Activated CD4-positive, alpha-beta memory T cell treated with anti-CD3 and anti-CD28 coated beads for 36 hours (primary cell): ENCODE measurements at regions of chr17 and their contacts with region 1.

Region 1: GRCh38 chr17:74790161-74791054 is 14.3 kb upstream of the NAT9 start:
- DNase-seq: no peak
- H3K4me3 Mint-ChIP-seq: no peak overlapping the region
- H3K27ac Mint-ChIP-seq: peak overlapping the region; percentile 57
- H3K4me1 Mint-ChIP-seq: peaks cover 31% of the 10 kb centered on the region
- H3K27me3 Mint-ChIP-seq: no peaks in the 10 kb centered on the region

Region 2: DNA sequence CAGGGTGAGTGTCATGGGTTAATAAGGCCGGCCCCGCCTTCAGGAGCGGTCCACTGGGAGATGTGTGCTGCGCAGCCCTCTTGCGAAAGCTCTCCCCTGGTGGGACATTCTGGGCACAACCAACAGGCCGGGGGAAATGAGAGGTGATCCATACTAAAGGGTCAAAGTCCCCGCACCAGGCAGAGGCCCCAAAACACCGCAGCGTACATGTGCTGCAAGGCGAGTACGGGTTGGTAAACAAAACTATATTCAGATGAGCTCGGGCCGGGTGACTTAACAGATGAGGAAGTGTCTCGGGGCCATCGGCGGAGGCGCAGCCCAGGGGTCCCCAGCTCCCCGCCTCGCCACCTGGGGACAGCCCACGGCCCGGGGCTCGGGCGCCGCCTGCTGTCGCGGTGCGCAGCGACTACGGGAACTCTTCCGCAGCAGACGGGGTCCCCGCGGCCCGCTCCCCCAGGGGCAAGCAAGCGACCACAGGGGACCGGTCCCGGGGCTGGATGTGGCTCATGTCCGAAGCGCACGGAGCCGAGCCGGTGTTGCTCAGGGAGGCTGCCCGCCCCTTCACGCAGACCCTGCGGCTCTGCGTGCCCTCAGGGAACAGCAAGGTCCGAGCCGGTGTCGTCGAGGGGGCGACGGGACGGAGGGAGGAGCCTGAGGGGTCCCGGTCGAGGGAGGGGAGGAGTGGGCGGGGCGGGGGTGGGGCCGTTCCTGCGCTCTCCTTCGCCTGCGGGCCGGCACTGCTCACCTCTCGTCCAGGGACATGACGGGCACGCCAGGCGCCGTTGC is 53.7 kb before region 1 on chr17 and contains the start of gene RAB37:
- CTCF ChIA-PET with region 1: interaction called, 20 read pairs
- POLR2A ChIA-PET with region 1: no interaction called
- intact Hi-C with region 1: no loop called
- DNase-seq: peak; percentile 53
- H3K4me3 Mint-ChIP-seq: peak within 1 kb of the TSS; percentile 77
- H3K27ac Mint-ChIP-seq: peak within 1 kb of the TSS; percentile 86
- H3K4me1 Mint-ChIP-seq: peaks cover 43% of the 10 kb centered on the region
- H3K27me3 Mint-ChIP-seq: no peaks in the 10 kb centered on the region
- total RNA-seq, gene RAB37: 6.5 to 7.0 TPM

Region 3: DNA sequence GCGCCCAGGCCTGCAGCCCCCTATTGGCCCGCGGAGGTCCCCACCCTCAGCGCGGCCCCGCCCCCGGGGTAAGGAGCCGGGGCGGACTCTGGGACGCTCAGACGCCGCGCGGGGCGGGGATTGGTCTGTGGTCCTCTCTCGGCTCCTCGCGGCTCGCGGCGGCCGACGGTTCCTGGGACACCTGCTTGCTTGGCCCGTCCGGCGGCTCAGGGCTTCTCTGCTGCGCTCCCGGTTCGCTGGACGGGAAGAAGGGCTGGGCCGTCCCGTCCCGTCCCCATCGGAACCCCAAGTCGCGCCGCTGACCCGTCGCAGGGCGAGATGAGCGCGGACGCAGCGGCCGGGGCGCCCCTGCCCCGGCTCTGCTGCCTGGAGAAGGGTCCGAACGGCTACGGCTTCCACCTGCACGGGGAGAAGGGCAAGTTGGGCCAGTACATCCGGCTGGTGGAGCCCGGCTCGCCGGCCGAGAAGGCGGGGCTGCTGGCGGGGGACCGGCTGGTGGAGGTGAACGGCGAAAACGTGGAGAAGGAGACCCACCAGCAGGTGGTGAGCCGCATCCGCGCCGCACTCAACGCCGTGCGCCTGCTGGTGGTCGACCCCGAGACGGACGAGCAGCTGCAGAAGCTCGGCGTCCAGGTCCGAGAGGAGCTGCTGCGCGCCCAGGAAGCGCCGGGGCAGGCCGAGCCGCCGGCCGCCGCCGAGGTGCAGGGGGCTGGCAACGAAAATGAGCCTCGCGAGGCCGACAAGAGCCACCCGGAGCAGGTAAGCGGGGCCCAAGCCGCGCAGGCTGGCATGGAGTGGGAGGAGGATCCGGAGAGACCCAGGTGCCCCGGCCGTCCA is 41.7 kb before region 1 on chr17 and contains the start of gene NHERF1:
- CTCF ChIA-PET with region 1: interaction called, 52 read pairs
- POLR2A ChIA-PET with region 1: no interaction called
- intact Hi-C with region 1: no loop called
- DNase-seq: peak; percentile 96
- H3K4me3 Mint-ChIP-seq: peak within 1 kb of the TSS; percentile 84
- H3K27ac Mint-ChIP-seq: peak within 1 kb of the TSS; percentile 85
- H3K4me1 Mint-ChIP-seq: peaks cover 52% of the 10 kb centered on the region
- H3K27me3 Mint-ChIP-seq: no peaks in the 10 kb centered on the region
- total RNA-seq, gene NHERF1: 136 TPM

Region 4: GRCh38 chr17:74770498-74771318 is 19.7 kb before region 1 on chr17:
- CTCF ChIA-PET with region 1: interaction called, 22 read pairs
- POLR2A ChIA-PET with region 1: interaction called, 3 read pairs
- intact Hi-C with region 1: no loop called
- DNase-seq: peak; percentile 83
- H3K4me3 Mint-ChIP-seq: no peak overlapping the region
- H3K27ac Mint-ChIP-seq: peak overlapping the region; percentile 71
- H3K4me1 Mint-ChIP-seq: peaks cover 40% of the 10 kb centered on the region
- H3K27me3 Mint-ChIP-seq: no peaks in the 10 kb centered on the region

Region 5: DNA sequence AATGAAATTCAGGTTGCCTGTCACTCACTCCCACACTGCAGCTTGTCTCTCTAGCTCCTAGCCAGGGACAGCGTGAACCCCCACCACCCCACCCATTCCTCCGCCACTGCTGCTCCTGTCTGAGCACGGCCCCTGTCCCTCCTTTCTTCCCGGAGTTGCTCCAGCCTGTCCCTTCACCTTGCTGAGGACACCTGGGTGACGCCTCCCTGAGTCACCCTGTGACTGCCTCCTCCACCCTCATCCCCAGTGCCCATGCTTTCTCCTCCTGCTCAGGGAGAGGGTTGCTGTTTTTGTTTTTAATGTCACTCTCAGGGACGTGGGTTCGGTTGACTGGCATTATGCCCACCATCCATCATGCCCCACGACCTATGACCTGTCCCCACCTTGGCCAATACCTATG is 11.5 kb after region 1 on chr17:
- CTCF ChIA-PET with region 1: interaction called, 11 read pairs
- POLR2A ChIA-PET with region 1: no interaction called
- intact Hi-C with region 1: no loop called
- DNase-seq: no peak
- H3K4me3 Mint-ChIP-seq: no peak overlapping the region
- H3K27ac Mint-ChIP-seq: no peak overlapping the region
- H3K4me1 Mint-ChIP-seq: no peaks in the 10 kb centered on the region
- H3K27me3 Mint-ChIP-seq: no peaks in the 10 kb centered on the region

Region 6: DNA sequence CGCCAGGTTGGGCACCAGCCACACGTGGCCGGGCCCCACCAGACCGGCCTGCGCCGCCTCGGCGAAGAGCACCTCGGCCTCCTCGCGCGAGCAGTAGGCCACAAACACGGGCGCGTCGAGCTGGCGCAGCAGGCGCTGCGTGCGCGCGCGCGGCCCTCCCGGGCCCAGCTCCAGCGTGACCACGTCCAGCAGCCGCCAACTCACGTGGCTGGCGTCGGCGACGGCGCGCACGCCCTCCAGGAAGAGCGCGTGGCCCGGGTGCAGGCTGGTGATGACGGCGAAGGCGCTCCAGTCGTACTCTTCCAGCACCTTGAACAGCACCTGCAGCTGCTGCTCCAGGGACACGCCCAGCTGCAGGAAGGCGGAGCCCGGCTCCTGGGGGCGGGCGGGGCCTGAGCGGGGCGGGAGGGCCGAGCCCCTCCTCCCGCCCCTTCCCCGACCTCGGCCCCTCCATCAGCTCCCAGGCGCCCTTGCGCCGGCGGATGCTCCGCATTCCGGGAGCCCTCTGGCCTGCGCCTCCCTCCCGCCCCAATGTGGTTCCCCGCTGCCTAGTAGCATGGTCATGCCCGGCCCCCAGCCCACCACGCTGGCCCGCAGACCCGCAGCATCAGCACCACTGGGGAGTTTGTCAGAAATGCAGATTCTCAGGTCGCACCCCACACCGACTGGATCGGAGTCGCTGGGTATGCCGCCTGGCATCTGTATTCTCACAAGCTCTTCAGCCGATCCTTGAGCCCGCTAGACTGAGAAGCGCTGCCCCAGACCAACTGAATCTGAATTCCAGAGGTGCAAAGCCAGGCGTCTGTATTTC is 62.0 kb after region 1 on chr17:
- CTCF ChIA-PET with region 1: interaction called, 26 read pairs
- POLR2A ChIA-PET with region 1: no interaction called
- intact Hi-C with region 1: no loop called
- DNase-seq: peak; percentile 71
- H3K4me3 Mint-ChIP-seq: peak overlapping the region; percentile 67
- H3K27ac Mint-ChIP-seq: no peak overlapping the region
- H3K4me1 Mint-ChIP-seq: peaks cover 8% of the 10 kb centered on the region
- H3K27me3 Mint-ChIP-seq: peaks cover 40% of the 10 kb centered on the region

Region 7: DNA sequence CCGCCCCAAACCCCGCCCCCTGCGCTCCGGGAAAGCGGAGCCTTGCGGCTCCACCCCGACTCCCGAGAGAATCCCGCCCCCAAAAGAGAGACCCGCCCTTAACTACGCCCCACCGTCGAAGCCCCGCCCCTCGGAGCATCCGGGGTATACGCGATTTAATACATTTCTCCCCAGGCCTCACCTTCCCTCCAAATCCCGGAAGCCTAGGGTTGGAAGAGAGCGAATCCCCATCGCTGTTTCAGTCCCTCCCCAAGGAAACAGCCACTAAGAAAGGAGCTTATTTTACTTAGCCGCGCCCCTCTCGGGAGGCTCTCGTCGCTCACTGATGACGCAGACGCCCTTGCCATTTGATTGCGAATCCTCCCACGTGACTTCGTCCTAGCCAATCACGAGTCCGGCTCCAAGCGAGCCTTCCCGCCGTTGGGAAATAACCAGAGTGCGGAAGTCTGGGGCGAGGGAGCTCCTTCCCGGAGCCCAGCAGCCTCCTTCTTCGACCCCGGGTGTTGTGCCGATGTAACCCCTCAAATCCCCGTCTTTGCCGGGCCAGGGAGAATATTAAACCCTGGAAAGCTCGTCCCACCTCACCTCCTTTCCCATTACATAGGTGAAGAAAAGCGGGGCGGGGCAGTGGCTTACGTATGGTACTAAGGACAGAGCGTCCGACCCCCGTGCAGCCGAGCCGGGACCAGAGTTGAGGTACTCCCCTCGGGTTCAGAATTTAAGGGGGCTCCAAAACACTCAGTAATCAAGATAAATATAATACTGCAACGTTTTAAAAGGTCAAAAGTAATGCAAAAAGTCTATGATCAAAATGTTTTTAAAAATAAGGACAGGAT is 82.8 kb after region 1 on chr17:
- CTCF ChIA-PET with region 1: interaction called, 23 read pairs
- POLR2A ChIA-PET with region 1: no interaction called
- intact Hi-C with region 1: no loop called
- DNase-seq: peak; percentile 100
- H3K4me3 Mint-ChIP-seq: peak overlapping the region; percentile 80
- H3K27ac Mint-ChIP-seq: peak overlapping the region; percentile 93
- H3K4me1 Mint-ChIP-seq: peaks cover 25% of the 10 kb centered on the region
- H3K27me3 Mint-ChIP-seq: no peaks in the 10 kb centered on the region

Region 8: DNA sequence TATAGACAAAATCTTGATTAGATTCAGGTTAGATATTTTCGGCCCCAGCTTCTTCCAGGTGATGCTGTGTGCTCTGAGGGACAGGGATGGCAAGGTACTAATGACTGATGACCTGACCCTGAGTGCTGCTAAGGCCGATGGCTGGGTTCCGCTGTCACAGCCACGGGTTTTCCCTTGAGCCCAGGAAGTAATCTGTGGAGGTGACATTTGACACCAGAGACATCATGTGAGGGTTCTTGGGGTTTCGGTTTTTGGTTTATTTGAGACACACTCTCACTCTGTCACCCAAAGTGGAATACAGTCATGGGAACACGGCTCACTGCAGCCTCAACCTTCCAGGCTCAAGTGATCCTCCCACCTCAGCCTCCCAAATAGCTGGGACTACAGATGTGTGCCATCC is 155.1 kb after region 1 on chr17:
- CTCF ChIA-PET with region 1: no interaction called
- POLR2A ChIA-PET with region 1: no interaction called
- intact Hi-C with region 1: no loop called
- DNase-seq: no peak
- H3K4me3 Mint-ChIP-seq: no peak overlapping the region
- H3K27ac Mint-ChIP-seq: no peak overlapping the region
- H3K4me1 Mint-ChIP-seq: no peaks in the 10 kb centered on the region
- H3K27me3 Mint-ChIP-seq: peaks cover 8% of the 10 kb centered on the region